Ovary (tissue), 10 donors: ENCODE measurements at regions of chr4 and their contacts with region 1.

Region 1: GRCh38 chr4:138680989-138681604 is 334.5 kb upstream of the NOCT start:
- DNase-seq: peak; percentile 63 to 82 (median 81)
- H3K4me3 ChIP-seq: no peak overlapping the region
- H3K27ac ChIP-seq: no peak overlapping the region
- H3K4me1 ChIP-seq: no peaks in the 10 kb centered on the region
- H3K27me3 ChIP-seq: no peaks in the 10 kb centered on the region
- CTCF ChIP-seq: peak; percentile 59 to 72 (median 69)
- EP300 ChIP-seq: no peak
- POLR2A ChIP-seq: no peak

Region 2: GRCh38 chr4:138035781-138036258 is 645.3 kb before region 1 on chr4:
- intact Hi-C with region 1: loop called in 2 of 4 experiments (anchors 10 kb)
- DNase-seq: no peak
- H3K4me3 ChIP-seq: no peak overlapping the region
- H3K27ac ChIP-seq: no peak overlapping the region
- H3K4me1 ChIP-seq: no peaks in the 10 kb centered on the region
- H3K27me3 ChIP-seq: no peaks in the 10 kb centered on the region
- CTCF ChIP-seq: peak in 1 of 3 donors; percentile 48
- EP300 ChIP-seq: no peak
- POLR2A ChIP-seq: no peak

Region 3: DNA sequence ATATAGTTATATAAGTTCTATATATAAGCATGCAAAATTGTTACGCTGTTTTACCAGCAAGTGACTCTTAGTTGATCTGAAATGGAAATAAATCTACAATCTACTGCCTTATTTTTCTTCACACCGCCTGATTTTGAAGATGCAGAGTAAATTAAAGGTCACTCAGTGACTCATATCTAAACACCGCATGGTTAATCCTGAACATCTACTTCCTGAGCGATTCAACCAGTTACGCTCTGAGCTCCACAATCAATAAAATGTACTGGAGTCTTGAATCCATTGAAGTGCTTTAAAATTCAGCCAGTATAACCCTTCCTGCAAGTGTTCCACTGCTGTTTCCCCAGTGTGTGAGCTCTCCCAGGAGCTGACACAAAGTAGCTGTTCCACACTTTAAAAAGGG is 631.7 kb before region 1 on chr4:
- intact Hi-C with region 1: loop called in 1 of 4 experiments (anchors 10 kb)
- DNase-seq: no peak
- H3K4me3 ChIP-seq: no peak overlapping the region
- H3K27ac ChIP-seq: no peak overlapping the region
- H3K4me1 ChIP-seq: no peaks in the 10 kb centered on the region
- H3K27me3 ChIP-seq: no peaks in the 10 kb centered on the region
- CTCF ChIP-seq: no peak
- EP300 ChIP-seq: no peak
- POLR2A ChIP-seq: no peak

Region 4: GRCh38 chr4:138669479-138670315 is 11.4 kb before region 1 on chr4:
- intact Hi-C with region 1: no loop called
- DNase-seq: no peak
- H3K4me3 ChIP-seq: no peak overlapping the region
- H3K27ac ChIP-seq: no peak overlapping the region
- H3K4me1 ChIP-seq: no peaks in the 10 kb centered on the region
- H3K27me3 ChIP-seq: no peaks in the 10 kb centered on the region
- CTCF ChIP-seq: no peak
- EP300 ChIP-seq: no peak
- POLR2A ChIP-seq: no peak

Region 5: GRCh38 chr4:139015269-139015947 is 334.3 kb after region 1 on chr4 and contains the start of gene NOCT:
- intact Hi-C with region 1: no loop called
- DNase-seq: peak; percentile 82 to 88 (median 86)
- H3K4me3 ChIP-seq: peak within 1 kb of the TSS; percentile 40
- H3K27ac ChIP-seq: peak within 1 kb of the TSS; percentile 78 to 84
- H3K4me1 ChIP-seq: peaks cover 2% of the 10 kb centered on the region
- H3K27me3 ChIP-seq: no peaks in the 10 kb centered on the region
- CTCF ChIP-seq: peak; percentile 7 to 60 (median 45)
- EP300 ChIP-seq: no peak
- POLR2A ChIP-seq: no peak
- total RNA-seq, gene NOCT: 0.97 to 5.9 (median 1.8) TPM

Region 6: DNA sequence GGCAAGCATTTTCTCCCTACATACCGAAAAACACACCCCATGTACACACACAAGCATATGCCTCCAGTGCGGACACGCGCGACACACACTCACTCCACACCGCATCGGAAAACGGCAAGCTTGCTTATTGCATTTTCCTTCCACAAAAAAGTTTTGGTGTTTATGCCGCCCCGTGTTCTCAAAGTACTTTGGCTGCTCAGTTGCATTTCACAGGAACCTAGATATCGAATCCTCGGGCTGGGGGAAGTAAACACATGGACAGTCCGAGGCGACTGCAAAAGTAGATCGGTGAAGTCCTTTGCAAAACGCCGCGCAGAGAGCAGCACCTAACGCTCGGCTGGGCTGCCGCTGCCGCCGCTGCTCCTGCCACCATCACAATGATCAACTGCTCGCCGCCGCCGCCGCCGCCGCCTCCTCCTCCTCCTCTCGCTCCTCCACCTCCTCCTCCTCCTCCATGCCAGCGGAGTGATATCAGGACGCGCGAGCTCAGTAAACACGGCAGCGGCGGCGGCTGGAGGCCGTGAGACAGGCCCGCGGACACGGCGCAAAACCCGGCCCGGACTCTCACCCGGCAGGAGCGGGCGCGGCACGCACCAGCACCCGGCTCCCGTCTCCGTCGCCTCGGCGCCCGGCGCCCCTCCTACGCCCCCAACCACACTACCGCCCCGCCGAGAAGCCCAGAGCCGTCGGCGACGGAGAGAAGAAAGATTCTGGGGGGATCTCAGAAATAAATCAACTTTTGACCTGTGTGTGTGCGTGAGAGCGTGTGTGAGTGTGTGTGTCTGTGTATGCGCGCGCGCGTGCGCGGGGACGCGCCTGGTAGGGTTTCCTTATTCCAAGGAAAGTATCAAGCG is 1472.8 kb after region 1 on chr4 and contains the start of gene MAML3:
- intact Hi-C with region 1: no loop called
- DNase-seq: peak; percentile 94 to 96 (median 96)
- H3K4me3 ChIP-seq: peak within 1 kb of the TSS; percentile 50
- H3K27ac ChIP-seq: peak within 1 kb of the TSS; percentile 96 to 99
- H3K4me1 ChIP-seq: peaks cover 10% of the 10 kb centered on the region
- H3K27me3 ChIP-seq: no peaks in the 10 kb centered on the region
- CTCF ChIP-seq: peak in 2 of 3 donors; percentile 11 to 51
- EP300 ChIP-seq: no peak
- POLR2A ChIP-seq: peak; percentile 78
- total RNA-seq, gene MAML3: 14.2 to 23.8 (median 17.0) TPM